ENCODE measurements at regions of chr6 and their contacts with region 1.

Region 1: DNA sequence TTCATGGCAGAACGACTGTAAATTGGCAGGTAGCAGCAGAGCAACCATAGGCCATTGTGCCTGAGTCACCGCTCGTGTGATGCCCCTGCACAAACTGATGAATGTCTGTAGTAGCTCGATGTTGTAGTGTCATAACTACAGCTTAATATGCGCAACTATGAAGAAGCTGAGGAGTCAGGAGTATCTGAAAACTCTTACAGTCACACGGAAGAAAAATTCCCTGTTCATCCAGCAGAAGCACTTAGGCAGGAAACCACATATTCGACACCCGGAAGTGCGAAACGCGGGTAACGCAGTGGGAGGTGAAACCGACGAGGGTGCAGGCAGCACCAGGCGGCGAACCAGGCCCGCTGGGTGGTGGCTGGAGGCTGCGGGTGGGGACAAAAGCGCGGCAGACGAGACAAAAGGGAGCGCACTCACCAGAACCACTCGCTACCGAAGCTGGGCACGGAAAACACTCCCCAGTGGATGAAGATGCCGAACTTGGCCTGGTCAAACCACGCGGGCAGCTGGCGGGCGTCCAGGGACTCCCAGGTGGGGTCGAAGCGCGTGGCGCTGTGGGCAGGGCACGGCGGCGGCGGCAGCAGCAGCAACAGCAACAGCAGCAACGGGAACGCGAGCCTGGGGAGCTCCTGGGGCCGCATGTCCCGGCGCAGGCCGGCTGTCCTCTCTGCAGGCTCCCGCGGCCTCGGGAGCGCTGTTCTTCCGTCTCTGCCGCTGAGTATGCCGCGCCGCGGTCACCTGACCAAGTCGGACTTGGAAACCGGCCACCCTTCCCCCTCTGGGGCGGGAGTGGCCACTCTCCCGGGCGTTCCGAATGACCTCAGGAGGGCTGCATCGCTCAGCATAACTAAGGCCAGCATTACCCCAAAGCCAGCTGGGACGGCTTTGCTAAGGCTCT is at the start of gene FUCA2:
- DNase-seq: peak; percentile 64 to 76 (median 70)
- H3K4me3 ChIP-seq: peak within 1 kb of the TSS; percentile 64 to 78
- H3K4me3 Mint-ChIP-seq: peak within 1 kb of the TSS; percentile 91 to 97 (median 92)
- H3K27ac ChIP-seq: peak within 1 kb of the TSS; percentile 67
- H3K27ac Mint-ChIP-seq: peak within 1 kb of the TSS; percentile 92 to 97 (median 94)
- H3K4me1 ChIP-seq: peaks cover 35% of the 10 kb centered on the region
- H3K4me1 Mint-ChIP-seq: peaks cover 20 to 45% (median 27%) of the 10 kb centered on the region in 4 donors
- H3K27me3 ChIP-seq: no peaks in the 10 kb centered on the region
- H3K27me3 Mint-ChIP-seq: no peaks in the 10 kb centered on the region
- total RNA-seq, gene FUCA2: 10.6 to 11.4 TPM

Region 2: GRCh38 chr6:143410859-143411270 is 100.4 kb before region 1 on chr6:
- CTCF ChIA-PET with region 1: no interaction called
- POLR2A ChIA-PET with region 1: no interaction called
- intact Hi-C with region 1: no loop called
- DNase-seq: no peak
- H3K4me3 ChIP-seq: no peak overlapping the region
- H3K4me3 Mint-ChIP-seq: no peak overlapping the region
- H3K27ac ChIP-seq: no peak overlapping the region
- H3K27ac Mint-ChIP-seq: no peak overlapping the region
- H3K4me1 ChIP-seq: no peaks in the 10 kb centered on the region
- H3K4me1 Mint-ChIP-seq: no peaks in the 10 kb centered on the region
- H3K27me3 ChIP-seq: no peaks in the 10 kb centered on the region
- H3K27me3 Mint-ChIP-seq: peaks cover 0 to 2% of the 10 kb centered on the region in 2 donors

Region 3: DNA sequence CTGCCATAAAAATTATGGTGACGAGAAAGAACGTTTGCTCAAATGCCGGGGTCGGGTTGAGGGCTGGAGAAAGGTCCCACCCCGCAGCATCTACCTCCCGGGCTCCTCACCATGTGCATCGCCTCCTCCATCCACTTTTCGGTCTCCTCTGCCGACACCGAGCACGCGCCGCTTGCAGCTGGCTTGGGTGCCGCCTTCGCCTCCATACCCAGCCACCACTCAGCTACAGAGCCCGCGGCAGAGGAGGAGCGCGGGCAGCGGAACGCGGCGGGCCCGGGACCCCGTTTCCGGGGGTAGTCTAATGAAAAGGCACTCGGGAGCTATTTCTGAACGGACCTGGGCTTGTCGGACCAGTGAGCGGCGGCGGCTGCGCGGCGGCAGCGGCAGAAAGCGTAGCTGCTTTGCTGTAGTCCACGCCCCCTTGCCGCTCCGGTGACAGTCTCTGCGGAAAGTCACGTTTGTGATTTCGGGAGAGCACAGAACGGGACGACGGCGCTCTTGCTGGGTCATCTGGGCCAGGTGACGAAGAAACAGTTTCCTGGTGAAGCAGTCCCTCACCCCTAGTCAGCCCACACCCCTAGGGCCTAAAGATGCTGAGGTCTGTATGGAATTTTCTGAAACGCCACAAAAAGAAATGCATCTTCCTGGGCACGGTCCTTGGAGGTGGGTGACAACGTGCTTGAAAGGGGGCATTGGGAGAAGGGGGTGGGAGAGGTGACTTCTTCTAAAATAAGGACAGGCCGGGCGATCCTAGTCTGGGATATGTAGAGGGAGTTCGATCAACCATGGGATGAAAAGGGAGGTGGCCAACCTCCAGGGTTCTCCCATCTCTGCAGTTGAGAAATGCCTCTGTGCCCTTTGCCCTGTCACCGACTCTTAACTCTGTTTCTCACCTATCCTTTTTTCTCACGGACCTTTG is 60.5 kb before region 1 on chr6 and contains the starts of genes ADAT2 and PEX3:
- CTCF ChIA-PET with region 1: interaction called, 6 read pairs
- POLR2A ChIA-PET with region 1: interaction called, 12 read pairs
- intact Hi-C with region 1: loop called (anchors 2 kb)
- DNase-seq: peak; percentile 94 to 95 (median 94)
- H3K4me3 ChIP-seq: peak within 1 kb of the TSS; percentile 95 to 99
- H3K4me3 Mint-ChIP-seq: peak within 1 kb of the TSS; percentile 94 to 100 (median 98)
- H3K27ac ChIP-seq: peak within 1 kb of the TSS; percentile 67
- H3K27ac Mint-ChIP-seq: peak within 1 kb of the TSS; percentile 86 to 99 (median 97)
- H3K4me1 ChIP-seq: peaks cover 28% of the 10 kb centered on the region
- H3K4me1 Mint-ChIP-seq: peaks cover 25 to 49% (median 36%) of the 10 kb centered on the region in 4 donors
- H3K27me3 ChIP-seq: no peaks in the 10 kb centered on the region
- H3K27me3 Mint-ChIP-seq: no peaks in the 10 kb centered on the region
- total RNA-seq, gene ADAT2: 10.5 to 11.2 TPM
- total RNA-seq, gene PEX3: 20.8 to 23.5 TPM

Region 4: GRCh38 chr6:143536865-143537691 is 25.8 kb after region 1 on chr6:
- CTCF ChIA-PET with region 1: interaction called, 114 read pairs
- POLR2A ChIA-PET with region 1: interaction called, 104 read pairs
- intact Hi-C with region 1: loop called (anchors 1 kb)
- DNase-seq: peak; percentile 53 to 64 (median 61)
- H3K4me3 ChIP-seq: peak overlapping the region; percentile 36 to 71
- H3K4me3 Mint-ChIP-seq: peak overlapping the region; percentile 88 to 95 (median 92)
- H3K27ac ChIP-seq: peak overlapping the region; percentile 73
- H3K27ac Mint-ChIP-seq: peak overlapping the region; percentile 91 to 96 (median 96)
- H3K4me1 ChIP-seq: peaks cover 54% of the 10 kb centered on the region
- H3K4me1 Mint-ChIP-seq: peaks cover 35 to 55% (median 47%) of the 10 kb centered on the region in 4 donors
- H3K27me3 ChIP-seq: no peaks in the 10 kb centered on the region
- H3K27me3 Mint-ChIP-seq: no peaks in the 10 kb centered on the region

Region 5: DNA sequence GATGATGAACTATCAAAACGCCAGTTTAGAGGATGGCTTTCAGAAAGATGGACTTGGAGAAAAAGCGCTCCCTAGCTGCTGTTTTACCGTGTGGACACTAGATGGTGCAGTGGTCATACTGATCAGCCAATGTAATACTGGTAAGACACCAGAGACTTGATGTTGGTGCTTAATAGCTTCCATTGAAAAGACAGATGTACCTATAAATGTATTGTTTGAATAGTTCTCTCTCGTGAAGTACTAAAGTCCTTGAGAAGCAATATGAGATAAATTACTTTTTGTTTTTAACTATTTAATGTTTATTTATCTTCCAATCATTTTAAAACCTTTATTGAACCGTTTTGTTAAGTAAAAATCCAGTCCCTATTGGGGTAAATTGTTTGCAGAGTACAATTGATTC is 64.2 kb after region 1 on chr6:
- CTCF ChIA-PET with region 1: interaction called, 40 read pairs
- POLR2A ChIA-PET with region 1: interaction called, 9 read pairs
- intact Hi-C with region 1: loop called (anchors 2 kb)
- DNase-seq: peak; percentile 54 to 72 (median 68)
- H3K4me3 ChIP-seq: no peak overlapping the region
- H3K4me3 Mint-ChIP-seq: no peak overlapping the region
- H3K27ac ChIP-seq: no peak overlapping the region
- H3K27ac Mint-ChIP-seq: peak overlapping the region in 4 of 7 donors; percentile 22 to 43 (median 32)
- H3K4me1 ChIP-seq: no peaks in the 10 kb centered on the region
- H3K4me1 Mint-ChIP-seq: peaks cover 11 to 35% (median 19%) of the 10 kb centered on the region in 4 donors
- H3K27me3 ChIP-seq: no peaks in the 10 kb centered on the region
- H3K27me3 Mint-ChIP-seq: no peaks in the 10 kb centered on the region

Region 6: GRCh38 chr6:143695130-143695968 is 184.1 kb after region 1 on chr6:
- CTCF ChIA-PET with region 1: no interaction called
- POLR2A ChIA-PET with region 1: no interaction called
- intact Hi-C with region 1: no loop called
- DNase-seq: no peak
- H3K4me3 ChIP-seq: no peak overlapping the region
- H3K4me3 Mint-ChIP-seq: peak overlapping the region in 2 of 8 donors; percentile 36 to 54
- H3K27ac ChIP-seq: no peak overlapping the region
- H3K27ac Mint-ChIP-seq: peak overlapping the region in 2 of 7 donors; percentile 48 to 59
- H3K4me1 ChIP-seq: peaks cover 29% of the 10 kb centered on the region
- H3K4me1 Mint-ChIP-seq: peaks cover 36 to 80% (median 62%) of the 10 kb centered on the region in 4 donors
- H3K27me3 ChIP-seq: no peaks in the 10 kb centered on the region
- H3K27me3 Mint-ChIP-seq: no peaks in the 10 kb centered on the region

Region 7: GRCh38 chr6:143940011-143940597 is 428.9 kb after region 1 on chr6:
- CTCF ChIA-PET with region 1: interaction called, 15 read pairs
- POLR2A ChIA-PET with region 1: no interaction called
- intact Hi-C with region 1: loop called (anchors 5 kb)
- DNase-seq: peak; percentile 55 to 66 (median 58)
- H3K4me3 ChIP-seq: no peak overlapping the region
- H3K4me3 Mint-ChIP-seq: no peak overlapping the region
- H3K27ac ChIP-seq: no peak overlapping the region
- H3K27ac Mint-ChIP-seq: no peak overlapping the region
- H3K4me1 ChIP-seq: no peaks in the 10 kb centered on the region
- H3K4me1 Mint-ChIP-seq: peaks cover 4 to 7% (median 6%) of the 10 kb centered on the region in 4 donors
- H3K27me3 ChIP-seq: no peaks in the 10 kb centered on the region
- H3K27me3 Mint-ChIP-seq: peaks cover 4 to 5% of the 10 kb centered on the region in 2 donors